Aorta (tissue), 5 donors: ENCODE measurements at regions of chr10 and their contacts with region 1.

Region 1: DNA sequence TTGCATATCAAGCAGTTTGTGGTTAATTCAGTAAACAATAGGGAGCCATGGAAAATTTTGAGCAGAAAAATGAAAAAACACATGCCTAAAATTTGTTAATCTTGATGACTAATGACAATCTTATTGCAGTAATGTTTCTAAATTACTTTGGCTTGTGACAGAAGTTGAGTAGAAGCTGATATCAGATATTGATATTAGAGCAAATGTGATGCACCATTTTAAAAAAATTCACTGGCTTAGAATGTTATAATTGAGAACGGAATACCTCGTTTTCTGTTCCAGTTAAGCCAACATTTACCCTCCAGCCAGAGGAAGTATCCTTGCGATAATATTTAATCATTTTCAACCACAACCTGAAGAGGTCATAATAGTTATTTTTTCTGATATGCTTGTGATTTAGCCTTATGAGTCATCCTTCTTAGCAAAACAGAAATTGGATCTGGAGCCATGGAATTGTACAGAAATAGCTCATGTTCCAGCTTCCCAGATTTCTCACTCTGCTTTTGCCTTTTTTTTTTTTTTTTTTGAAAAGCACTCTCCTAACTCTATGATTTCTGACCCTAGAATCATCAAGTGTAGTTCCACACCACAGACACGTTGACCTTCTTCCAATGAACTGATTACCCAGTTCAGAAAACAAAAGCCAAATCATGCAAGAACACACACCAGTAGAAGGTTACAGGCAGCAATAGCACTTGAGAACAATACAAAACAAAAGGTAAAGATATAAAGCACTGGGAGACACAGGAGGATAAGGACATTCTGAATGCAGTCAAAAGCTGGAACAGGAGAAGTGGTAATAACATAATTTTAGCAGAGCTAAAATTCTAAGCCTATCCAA is 96.8 kb upstream of the PHYHIPL start:
- DNase-seq: no peak
- ATAC-seq: peak; percentile 83
- H3K4me3 ChIP-seq: no peak overlapping the region
- H3K27ac ChIP-seq: peak overlapping the region; percentile 99
- H3K4me1 ChIP-seq: peaks cover 12 to 15% of the 10 kb centered on the region in 2 donors
- H3K27me3 ChIP-seq: no peaks in the 10 kb centered on the region

Region 2: GRCh38 chr10:58972576-58973229 is 106.9 kb before region 1 on chr10:
- intact Hi-C with region 1: no loop called
- DNase-seq: no peak
- ATAC-seq: no peak
- H3K4me3 ChIP-seq: no peak overlapping the region
- H3K27ac ChIP-seq: no peak overlapping the region
- H3K4me1 ChIP-seq: no peaks in the 10 kb centered on the region
- H3K27me3 ChIP-seq: no peaks in the 10 kb centered on the region

Region 3: DNA sequence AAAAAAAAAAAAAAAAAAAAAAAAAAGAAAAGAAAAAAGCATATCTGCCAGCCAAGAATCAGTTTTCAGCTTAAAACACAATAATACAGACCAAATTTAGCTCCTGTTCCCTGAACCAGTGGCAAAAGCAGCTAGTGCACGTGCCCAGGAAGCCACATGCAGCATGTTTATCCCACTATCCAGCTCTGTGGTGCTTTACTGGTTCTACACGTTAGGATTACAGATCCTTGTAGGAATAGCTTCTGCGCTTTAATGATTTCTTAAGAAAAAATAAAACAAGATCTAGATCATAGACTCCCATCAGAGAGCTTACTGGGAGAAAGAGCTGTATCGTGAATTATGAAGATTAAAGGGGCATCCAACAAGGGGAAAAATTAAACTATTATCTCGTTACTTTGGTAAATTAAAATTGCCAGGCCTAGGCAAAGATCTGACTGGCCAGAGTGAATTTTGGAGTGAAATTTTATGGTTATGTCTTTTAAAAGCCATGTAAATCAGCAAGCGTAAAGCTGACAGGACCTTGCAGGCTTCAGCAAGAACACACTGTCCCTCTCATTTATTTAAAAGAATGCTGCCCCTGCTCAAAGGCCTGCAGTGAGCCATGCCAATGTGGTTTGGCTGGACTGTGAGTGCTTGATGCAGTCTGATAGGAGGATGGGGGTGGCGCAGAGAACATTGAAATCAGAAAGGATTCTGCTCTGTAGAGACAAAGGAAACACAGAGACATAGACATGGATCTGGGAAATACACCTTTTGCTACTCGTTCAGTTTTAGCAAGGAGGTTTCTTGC is 80.5 kb before region 1 on chr10:
- intact Hi-C with region 1: loop called in 1 of 2 experiments (anchors 5 kb)
- DNase-seq: peak; percentile 80 to 82
- ATAC-seq: peak; percentile 91
- H3K4me3 ChIP-seq: no peak overlapping the region
- H3K27ac ChIP-seq: peak overlapping the region; percentile 50 to 70
- H3K4me1 ChIP-seq: peaks cover 0 to 7% of the 10 kb centered on the region in 2 donors
- H3K27me3 ChIP-seq: no peaks in the 10 kb centered on the region

Region 4: GRCh38 chr10:59181668-59182067 is 102.1 kb after region 1 on chr10:
- intact Hi-C with region 1: loop called in 1 of 2 experiments (anchors 5 kb)
- DNase-seq: no peak
- ATAC-seq: no peak
- H3K4me3 ChIP-seq: no peak overlapping the region
- H3K27ac ChIP-seq: no peak overlapping the region
- H3K4me1 ChIP-seq: peaks cover 0 to 1% of the 10 kb centered on the region in 2 donors
- H3K27me3 ChIP-seq: no peaks in the 10 kb centered on the region

Region 5: DNA sequence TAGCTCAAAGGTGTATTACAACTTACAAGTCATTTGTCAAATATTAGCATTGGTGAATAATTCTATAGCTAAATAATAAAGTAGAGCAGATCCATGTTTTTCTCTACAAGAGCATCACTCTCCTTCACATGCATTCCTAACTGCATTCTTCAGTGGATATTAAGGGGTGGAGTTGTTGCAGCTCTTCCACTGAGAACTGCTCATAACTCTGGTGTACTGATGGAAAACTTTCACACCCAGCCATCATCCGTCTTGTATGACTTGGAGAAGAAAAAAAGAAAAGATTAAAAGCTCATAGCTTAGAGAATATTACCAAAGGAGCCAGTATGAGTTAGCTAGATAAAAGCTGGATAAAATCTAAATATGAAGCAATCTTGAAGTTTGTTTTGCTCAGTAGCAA is 292.9 kb after region 1 on chr10:
- intact Hi-C with region 1: no loop called
- DNase-seq: no peak
- ATAC-seq: no peak
- H3K4me3 ChIP-seq: no peak overlapping the region
- H3K27ac ChIP-seq: no peak overlapping the region
- H3K4me1 ChIP-seq: peaks cover 3 to 4% of the 10 kb centered on the region in 2 donors
- H3K27me3 ChIP-seq: no peaks in the 10 kb centered on the region